IMR-90 (cell line): ENCODE measurements at regions of chr2 and their contacts with region 1.

Region 1: GRCh38 chr2:202135091-202135874 is 62.2 kb downstream of the KIAA2012 start:
- DNase-seq: peak; percentile 100
- ATAC-seq: peak; percentile 82
- H3K4me3 ChIP-seq: no peak overlapping the region
- H3K27ac ChIP-seq: peak overlapping the region; percentile 42
- H3K4me1 ChIP-seq: peaks cover 20% of the 10 kb centered on the region
- H3K27me3 ChIP-seq: no peaks in the 10 kb centered on the region
- CTCF ChIP-seq: peak; percentile 16; the same call in 1 of the 2 replicates
- POLR2A ChIP-seq: no peak
- RAD21 ChIP-seq: peak; percentile 27; the same call in 1 of the 2 replicates

Region 2: GRCh38 chr2:202038471-202039277 is 96.6 kb before region 1 on chr2:
- CTCF ChIA-PET with region 1: no interaction called
- POLR2A ChIA-PET with region 1: no interaction called
- dilution Hi-C with region 1: no loop called
- in situ Hi-C with region 1: no loop called
- intact Hi-C with region 1: loop called (anchors 1 kb)
- DNase-seq: peak; percentile 62
- ATAC-seq: peak; percentile 7; the same call in 1 of the 2 replicates
- H3K4me3 ChIP-seq: peak overlapping the region; percentile 39
- H3K27ac ChIP-seq: peak overlapping the region; percentile 63; the same call in 1 of the 2 replicates
- H3K4me1 ChIP-seq: peaks cover 16% of the 10 kb centered on the region
- H3K27me3 ChIP-seq: no peaks in the 10 kb centered on the region
- CTCF ChIP-seq: no peak
- POLR2A ChIP-seq: no peak; the same call in 1 of the 2 replicates
- RAD21 ChIP-seq: peak; percentile 3; the same call in 1 of the 2 replicates

Region 3: GRCh38 chr2:202084265-202084664 is 51.0 kb before region 1 on chr2:
- CTCF ChIA-PET with region 1: no interaction called
- POLR2A ChIA-PET with region 1: no interaction called
- dilution Hi-C with region 1: no loop called
- in situ Hi-C with region 1: no loop called
- intact Hi-C with region 1: no loop called
- DNase-seq: peak; percentile 15
- ATAC-seq: peak; percentile 65
- H3K4me3 ChIP-seq: no peak overlapping the region
- H3K27ac ChIP-seq: no peak overlapping the region
- H3K4me1 ChIP-seq: peaks cover 4% of the 10 kb centered on the region
- H3K27me3 ChIP-seq: no peaks in the 10 kb centered on the region; the same call in 1 of the 2 replicates
- CTCF ChIP-seq: no peak
- POLR2A ChIP-seq: no peak
- RAD21 ChIP-seq: no peak

Region 4: DNA sequence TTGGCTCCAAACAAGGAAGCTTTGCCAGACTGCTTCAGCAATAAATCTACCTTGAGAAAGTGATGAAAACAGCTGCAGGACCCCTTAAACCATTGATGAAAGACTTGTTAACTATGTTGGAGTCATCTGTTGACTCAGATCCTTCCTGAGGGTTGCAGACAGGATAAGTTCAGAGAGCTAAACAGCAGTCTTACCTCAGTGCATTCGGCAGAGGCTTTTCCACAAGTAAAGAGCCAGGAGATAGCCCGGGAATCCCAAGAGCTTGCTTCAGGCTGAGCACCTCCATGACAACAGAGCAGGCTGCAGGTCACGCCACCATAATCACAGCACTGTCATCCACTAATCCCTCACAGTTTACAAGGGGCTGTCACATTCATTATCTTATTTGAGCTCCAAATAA is 38.5 kb before region 1 on chr2:
- CTCF ChIA-PET with region 1: no interaction called
- POLR2A ChIA-PET with region 1: no interaction called
- dilution Hi-C with region 1: no loop called
- in situ Hi-C with region 1: no loop called
- intact Hi-C with region 1: no loop called
- DNase-seq: peak; percentile 88
- ATAC-seq: peak; percentile 48
- H3K4me3 ChIP-seq: no peak overlapping the region
- H3K27ac ChIP-seq: no peak overlapping the region
- H3K4me1 ChIP-seq: peaks cover 2% of the 10 kb centered on the region; the same call in 1 of the 2 replicates
- H3K27me3 ChIP-seq: no peaks in the 10 kb centered on the region
- CTCF ChIP-seq: no peak
- POLR2A ChIP-seq: no peak
- RAD21 ChIP-seq: no peak

Region 5: GRCh38 chr2:202115479-202115971 is 19.8 kb before region 1 on chr2:
- CTCF ChIA-PET with region 1: no interaction called
- POLR2A ChIA-PET with region 1: no interaction called
- dilution Hi-C with region 1: no loop called
- in situ Hi-C with region 1: no loop called
- intact Hi-C with region 1: loop called (anchors 2 kb)
- DNase-seq: peak; percentile 89
- ATAC-seq: peak; percentile 75
- H3K4me3 ChIP-seq: no peak overlapping the region
- H3K27ac ChIP-seq: peak overlapping the region; percentile 87
- H3K4me1 ChIP-seq: peaks cover 27% of the 10 kb centered on the region
- H3K27me3 ChIP-seq: no peaks in the 10 kb centered on the region
- CTCF ChIP-seq: no peak
- POLR2A ChIP-seq: no peak
- RAD21 ChIP-seq: no peak

Region 6: GRCh38 chr2:202801544-202801943 is 666.3 kb after region 1 on chr2:
- CTCF ChIA-PET with region 1: no interaction called
- POLR2A ChIA-PET with region 1: no interaction called
- dilution Hi-C with region 1: no loop called
- in situ Hi-C with region 1: no loop called
- intact Hi-C with region 1: no loop called
- DNase-seq: no peak
- ATAC-seq: no peak
- H3K4me3 ChIP-seq: no peak overlapping the region
- H3K27ac ChIP-seq: no peak overlapping the region
- H3K4me1 ChIP-seq: no peaks in the 10 kb centered on the region
- H3K27me3 ChIP-seq: no peaks in the 10 kb centered on the region
- CTCF ChIP-seq: no peak
- POLR2A ChIP-seq: no peak
- RAD21 ChIP-seq: no peak